ENCODE measurements at regions of chr2 and their contacts with region 1.

Region 1: GRCh38 chr2:64730551-64731262 is 77.0 kb upstream of the SERTAD2 start:
- DNase-seq: peak; percentile 90
- ATAC-seq: peak; percentile 84
- H3K4me3 ChIP-seq: peak overlapping the region; percentile 42
- H3K27ac ChIP-seq: peak overlapping the region; percentile 46
- H3K4me1 ChIP-seq: peaks cover 4% of the 10 kb centered on the region
- H3K27me3 ChIP-seq: no peaks in the 10 kb centered on the region
- CTCF ChIP-seq: no peak
- POLR2A ChIP-seq: no peak
- RAD21 ChIP-seq: peak; percentile 27; the same call in 1 of the 2 replicates

Region 2: GRCh38 chr2:64214281-64215115 is 516.2 kb before region 1 on chr2:
- CTCF ChIA-PET with region 1: no interaction called
- POLR2A ChIA-PET with region 1: no interaction called
- dilution Hi-C with region 1: no loop called
- in situ Hi-C with region 1: no loop called
- intact Hi-C with region 1: no loop called
- DNase-seq: no peak
- ATAC-seq: no peak
- H3K4me3 ChIP-seq: no peak overlapping the region
- H3K27ac ChIP-seq: no peak overlapping the region
- H3K4me1 ChIP-seq: no peaks in the 10 kb centered on the region
- H3K27me3 ChIP-seq: peaks cover 11% of the 10 kb centered on the region; the same call in 1 of the 2 replicates
- CTCF ChIP-seq: no peak
- POLR2A ChIP-seq: no peak
- RAD21 ChIP-seq: no peak

Region 3: GRCh38 chr2:64653349-64654062 is 77.2 kb before region 1 on chr2 and contains the start of gene SERTAD2:
- CTCF ChIA-PET with region 1: no interaction called
- POLR2A ChIA-PET with region 1: no interaction called
- dilution Hi-C with region 1: no loop called
- in situ Hi-C with region 1: loop called (anchors 5 kb)
- intact Hi-C with region 1: loop called (anchors 5 kb)
- DNase-seq: peak; percentile 84
- ATAC-seq: peak; percentile 91
- H3K4me3 ChIP-seq: peak within 1 kb of the TSS; percentile 98
- H3K27ac ChIP-seq: peak within 1 kb of the TSS; percentile 98
- H3K4me1 ChIP-seq: peaks cover 5% of the 10 kb centered on the region
- H3K27me3 ChIP-seq: no peaks in the 10 kb centered on the region
- CTCF ChIP-seq: peak; percentile 16; the same call in 1 of the 2 replicates
- POLR2A ChIP-seq: no peak
- RAD21 ChIP-seq: peak; percentile 24; the same call in 1 of the 2 replicates
- total RNA-seq, gene SERTAD2: 5.0 and 6.7 TPM in 2 replicates

Region 4: GRCh38 chr2:64661741-64662169 is 69.0 kb before region 1 on chr2:
- CTCF ChIA-PET with region 1: no interaction called
- POLR2A ChIA-PET with region 1: no interaction called
- dilution Hi-C with region 1: no loop called
- in situ Hi-C with region 1: loop called (anchors 5 kb)
- intact Hi-C with region 1: loop called (anchors 5 kb)
- DNase-seq: no peak
- ATAC-seq: peak; percentile 53; the same call in 1 of the 2 replicates
- H3K4me3 ChIP-seq: no peak overlapping the region
- H3K27ac ChIP-seq: no peak overlapping the region
- H3K4me1 ChIP-seq: no peaks in the 10 kb centered on the region
- H3K27me3 ChIP-seq: no peaks in the 10 kb centered on the region
- CTCF ChIP-seq: no peak
- POLR2A ChIP-seq: no peak
- RAD21 ChIP-seq: no peak

Region 5: GRCh38 chr2:64679673-64680425 is 50.9 kb before region 1 on chr2:
- CTCF ChIA-PET with region 1: no interaction called
- POLR2A ChIA-PET with region 1: no interaction called
- dilution Hi-C with region 1: no loop called
- in situ Hi-C with region 1: no loop called
- intact Hi-C with region 1: loop called (anchors 5 kb)
- DNase-seq: no peak
- ATAC-seq: no peak
- H3K4me3 ChIP-seq: no peak overlapping the region
- H3K27ac ChIP-seq: no peak overlapping the region
- H3K4me1 ChIP-seq: peaks cover 2% of the 10 kb centered on the region; the same call in 1 of the 2 replicates
- H3K27me3 ChIP-seq: no peaks in the 10 kb centered on the region
- CTCF ChIP-seq: no peak
- POLR2A ChIP-seq: no peak
- RAD21 ChIP-seq: no peak

Region 6: GRCh38 chr2:64698668-64699444 is 31.9 kb before region 1 on chr2:
- CTCF ChIA-PET with region 1: no interaction called
- POLR2A ChIA-PET with region 1: no interaction called
- dilution Hi-C with region 1: no loop called
- in situ Hi-C with region 1: no loop called
- intact Hi-C with region 1: loop called (anchors 5 kb)
- DNase-seq: peak; percentile 94
- ATAC-seq: peak; percentile 97
- H3K4me3 ChIP-seq: no peak overlapping the region
- H3K27ac ChIP-seq: peak overlapping the region; percentile 66
- H3K4me1 ChIP-seq: peaks cover 16% of the 10 kb centered on the region
- H3K27me3 ChIP-seq: no peaks in the 10 kb centered on the region
- CTCF ChIP-seq: no peak
- POLR2A ChIP-seq: no peak
- RAD21 ChIP-seq: no peak

Region 7: DNA sequence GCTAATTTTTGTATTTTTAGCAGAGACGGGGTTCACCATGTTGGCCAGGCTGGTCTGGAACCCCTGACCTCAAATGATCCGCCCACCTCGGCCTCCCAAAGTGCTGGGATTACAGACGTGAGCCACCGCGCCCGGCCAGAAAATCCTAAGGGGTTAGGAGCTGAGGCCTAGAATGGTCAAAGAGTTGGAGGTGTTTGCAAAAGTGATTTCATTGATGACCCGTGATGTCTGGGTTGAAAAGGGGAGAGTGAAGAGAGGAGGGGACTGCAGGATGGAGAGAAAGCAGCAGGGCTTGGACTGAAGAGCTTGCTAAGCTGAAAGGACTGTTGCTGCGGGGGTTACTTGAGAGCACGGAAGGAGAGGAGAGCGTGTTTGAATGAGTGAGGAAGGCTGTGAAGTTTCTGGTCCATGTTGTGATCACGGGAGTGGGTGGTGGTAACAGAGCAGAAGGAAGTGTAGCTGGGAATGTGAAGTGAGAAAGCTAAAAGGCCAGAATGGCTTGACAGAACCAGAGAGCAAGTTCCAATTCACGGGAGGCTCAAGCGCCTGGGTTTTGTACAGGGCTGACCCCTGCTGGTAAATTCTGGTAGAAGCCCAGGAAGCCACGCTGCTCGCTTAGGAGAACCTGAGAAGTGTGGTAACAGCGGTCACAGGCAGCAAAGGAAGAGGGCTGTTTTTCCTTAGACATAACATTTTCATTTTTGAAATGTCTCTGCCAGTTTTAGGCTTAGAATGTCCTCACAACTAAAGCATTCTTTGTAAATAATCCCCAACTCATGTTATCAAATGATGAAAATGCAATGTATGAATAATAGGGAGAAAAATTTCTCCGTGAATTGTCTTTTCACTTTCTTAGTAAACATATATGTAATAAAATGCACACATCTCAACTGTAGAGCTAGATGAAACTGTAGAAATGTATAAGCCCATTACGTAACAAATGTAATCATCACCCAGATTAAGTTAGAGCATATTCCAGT is 456.5 kb after region 1 on chr2:
- CTCF ChIA-PET with region 1: no interaction called
- POLR2A ChIA-PET with region 1: no interaction called
- dilution Hi-C with region 1: no loop called
- in situ Hi-C with region 1: no loop called
- intact Hi-C with region 1: no loop called
- DNase-seq: peak; percentile 75
- ATAC-seq: peak; percentile 99
- H3K4me3 ChIP-seq: no peak overlapping the region
- H3K27ac ChIP-seq: no peak overlapping the region
- H3K4me1 ChIP-seq: peaks cover 3% of the 10 kb centered on the region; the same call in 1 of the 2 replicates
- H3K27me3 ChIP-seq: peaks cover 2% of the 10 kb centered on the region; the same call in 1 of the 2 replicates
- CTCF ChIP-seq: peak; percentile 82
- POLR2A ChIP-seq: no peak
- RAD21 ChIP-seq: peak; percentile 74